ENCODE measurements at regions of chr1 and their contacts with region 1.

Region 1: GRCh38 chr1:168342572-168343280 is 62.0 kb downstream of the TBX19 start:
- DNase-seq: peak; percentile 89
- H3K4me3 Mint-ChIP-seq: no peak overlapping the region
- H3K27ac Mint-ChIP-seq: peak overlapping the region; percentile 72
- H3K4me1 Mint-ChIP-seq: peaks cover 55% of the 10 kb centered on the region
- H3K27me3 Mint-ChIP-seq: no peaks in the 10 kb centered on the region

Region 2: GRCh38 chr1:168312718-168313604 is 29.8 kb before region 1 on chr1:
- CTCF ChIA-PET with region 1: no interaction called
- POLR2A ChIA-PET with region 1: no interaction called
- DNase-seq: no peak
- H3K4me3 Mint-ChIP-seq: no peak overlapping the region
- H3K27ac Mint-ChIP-seq: no peak overlapping the region
- H3K4me1 Mint-ChIP-seq: peaks cover 30% of the 10 kb centered on the region
- H3K27me3 Mint-ChIP-seq: no peaks in the 10 kb centered on the region

Region 3: GRCh38 chr1:168360151-168361021 is 17.7 kb after region 1 on chr1:
- CTCF ChIA-PET with region 1: interaction called, 79 read pairs
- POLR2A ChIA-PET with region 1: no interaction called
- DNase-seq: peak; percentile 32
- H3K4me3 Mint-ChIP-seq: no peak overlapping the region
- H3K27ac Mint-ChIP-seq: no peak overlapping the region
- H3K4me1 Mint-ChIP-seq: peaks cover 42% of the 10 kb centered on the region
- H3K27me3 Mint-ChIP-seq: peaks cover 9% of the 10 kb centered on the region

Region 4: GRCh38 chr1:168373869-168374268 is 31.1 kb after region 1 on chr1:
- CTCF ChIA-PET with region 1: interaction called, 31 read pairs
- POLR2A ChIA-PET with region 1: no interaction called
- DNase-seq: no peak
- H3K4me3 Mint-ChIP-seq: no peak overlapping the region
- H3K27ac Mint-ChIP-seq: no peak overlapping the region
- H3K4me1 Mint-ChIP-seq: no peaks in the 10 kb centered on the region
- H3K27me3 Mint-ChIP-seq: no peaks in the 10 kb centered on the region

Region 5: DNA sequence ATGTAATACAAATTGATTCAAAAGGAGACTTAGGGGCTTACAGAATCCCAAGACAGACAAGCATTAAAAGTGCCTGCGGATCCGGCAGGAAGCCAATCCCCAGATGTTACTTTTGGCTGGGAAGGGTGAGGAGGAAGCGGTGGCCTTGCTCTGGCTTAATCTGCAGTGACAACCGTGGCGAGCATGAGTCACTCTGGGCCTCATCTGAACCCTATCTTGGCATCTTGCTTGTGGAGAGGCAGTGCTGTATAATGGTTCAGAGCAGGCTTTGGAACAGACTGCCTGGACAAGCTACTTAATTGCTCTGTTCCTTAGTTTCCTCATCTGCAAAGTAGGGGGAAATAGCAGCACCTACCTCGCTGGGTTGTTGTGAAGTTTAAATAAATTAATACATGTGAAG is 127.0 kb after region 1 on chr1:
- CTCF ChIA-PET with region 1: interaction called, 29 read pairs
- POLR2A ChIA-PET with region 1: no interaction called
- DNase-seq: peak; percentile 29
- H3K4me3 Mint-ChIP-seq: no peak overlapping the region
- H3K27ac Mint-ChIP-seq: no peak overlapping the region
- H3K4me1 Mint-ChIP-seq: peaks cover 63% of the 10 kb centered on the region
- H3K27me3 Mint-ChIP-seq: no peaks in the 10 kb centered on the region